A673 (cell line): ENCODE measurements at regions of chr12 and their contacts with region 1.

Region 1: GRCh38 chr12:6632026-6632983 is 3.5 kb downstream of the LPAR5 start:
- DNase-seq: peak; percentile 54
- H3K4me3 ChIP-seq: no peak overlapping the region
- H3K27ac ChIP-seq: no peak overlapping the region
- H3K4me1 ChIP-seq: peaks cover 15% of the 10 kb centered on the region
- H3K27me3 ChIP-seq: no peaks in the 10 kb centered on the region
- CTCF ChIP-seq: no peak

Region 2: DNA sequence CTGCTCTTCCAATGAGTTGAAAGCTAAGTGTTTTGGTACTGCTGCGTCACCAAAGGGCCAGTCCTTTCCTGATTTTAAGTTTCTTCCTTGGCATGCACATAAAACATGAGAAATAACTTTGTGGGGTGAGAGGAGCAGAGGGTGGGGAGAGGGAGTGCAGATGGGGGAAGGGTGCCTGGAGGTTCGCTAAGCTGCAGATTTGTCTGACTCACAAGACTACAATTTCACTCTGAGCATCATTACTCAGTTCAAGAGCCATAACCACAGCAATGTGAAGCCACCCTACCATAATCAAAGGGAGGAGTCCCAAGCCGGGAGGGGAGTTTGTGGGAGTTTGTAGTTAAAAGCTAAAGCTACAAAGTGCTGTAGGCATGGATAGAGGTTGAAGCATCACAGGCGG is 823.3 kb before region 1 on chr12:
- CTCF ChIA-PET with region 1: no interaction called
- POLR2A ChIA-PET with region 1: no interaction called
- intact Hi-C with region 1: no loop called
- DNase-seq: no peak
- H3K4me3 ChIP-seq: no peak overlapping the region
- H3K27ac ChIP-seq: no peak overlapping the region
- H3K4me1 ChIP-seq: no peaks in the 10 kb centered on the region
- H3K27me3 ChIP-seq: peaks cover 83% of the 10 kb centered on the region
- CTCF ChIP-seq: no peak

Region 3: GRCh38 chr12:6723607-6724396 is 91.5 kb after region 1 on chr12 and contains the start of gene COPS7A:
- CTCF ChIA-PET with region 1: no interaction called
- POLR2A ChIA-PET with region 1: no interaction called
- intact Hi-C with region 1: no loop called
- DNase-seq: peak; percentile 99
- H3K4me3 ChIP-seq: peak within 1 kb of the TSS; percentile 56
- H3K27ac ChIP-seq: peak within 1 kb of the TSS; percentile 87
- H3K4me1 ChIP-seq: peaks cover 10% of the 10 kb centered on the region
- H3K27me3 ChIP-seq: no peaks in the 10 kb centered on the region
- CTCF ChIP-seq: no peak
- total RNA-seq, gene COPS7A: 67.2 and 67.7 TPM in 2 replicates

Region 4: DNA sequence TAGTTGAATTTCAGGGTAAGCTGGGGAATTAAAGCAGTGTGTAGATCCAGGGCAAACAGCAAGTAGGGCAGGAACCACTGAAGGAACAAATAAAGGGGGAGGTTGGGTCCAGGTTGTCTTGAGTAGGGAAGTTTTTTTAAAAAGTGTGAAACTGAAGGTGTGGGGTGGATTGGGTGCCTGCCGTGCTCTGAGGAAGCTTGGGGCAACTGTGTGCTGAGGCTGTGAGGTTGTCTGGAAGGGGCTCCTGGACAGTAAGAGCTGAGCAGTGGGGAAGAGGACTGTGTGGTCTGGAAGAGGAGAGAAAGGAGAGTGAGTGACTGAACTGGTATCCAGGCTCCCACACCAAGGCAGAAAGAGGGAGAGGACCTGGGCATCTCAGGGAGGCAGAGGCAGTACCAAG is 178.5 kb after region 1 on chr12:
- CTCF ChIA-PET with region 1: interaction called, 10 read pairs
- POLR2A ChIA-PET with region 1: no interaction called
- intact Hi-C with region 1: no loop called
- DNase-seq: no peak
- H3K4me3 ChIP-seq: no peak overlapping the region
- H3K27ac ChIP-seq: no peak overlapping the region
- H3K4me1 ChIP-seq: no peaks in the 10 kb centered on the region
- H3K27me3 ChIP-seq: no peaks in the 10 kb centered on the region
- CTCF ChIP-seq: no peak

Region 5: GRCh38 chr12:7092229-7092985 is 460.1 kb after region 1 on chr12 and contains the start of gene C1R:
- CTCF ChIA-PET with region 1: no interaction called
- POLR2A ChIA-PET with region 1: no interaction called
- intact Hi-C with region 1: no loop called
- DNase-seq: peak; percentile 79
- H3K4me3 ChIP-seq: peak within 1 kb of the TSS; percentile 47
- H3K27ac ChIP-seq: no peak within 1 kb of the TSS
- H3K4me1 ChIP-seq: peaks cover 8% of the 10 kb centered on the region
- H3K27me3 ChIP-seq: no peaks in the 10 kb centered on the region
- CTCF ChIP-seq: peak; percentile 90
- total RNA-seq, gene C1R: 10.9 and 15.0 TPM in 2 replicates